ENCODE measurements at regions of chr18 and their contacts with region 1.

Region 1: GRCh38 chr18:11923450-11923849 is 15.3 kb upstream of the MPPE1 start:
- DNase-seq: no peak
- H3K4me3 ChIP-seq: no peak overlapping the region
- H3K27ac ChIP-seq: no peak overlapping the region
- H3K4me1 ChIP-seq: no peaks in the 10 kb centered on the region
- H3K27me3 ChIP-seq: no peaks in the 10 kb centered on the region
- CTCF ChIP-seq: no peak

Region 2: GRCh38 chr18:11733031-11733430 is 190.4 kb before region 1 on chr18:
- CTCF ChIA-PET with region 1: no interaction called
- dilution Hi-C with region 1: no loop called
- in situ Hi-C with region 1: no loop called
- intact Hi-C with region 1: no loop called
- DNase-seq: peak; percentile 63
- H3K4me3 ChIP-seq: peak overlapping the region in 1 of 3 experiments; percentile 16
- H3K27ac ChIP-seq: no peak overlapping the region
- H3K4me1 ChIP-seq: peaks cover 12% of the 10 kb centered on the region
- H3K27me3 ChIP-seq: no peaks in the 10 kb centered on the region
- CTCF ChIP-seq: peak; percentile 87 to 96

Region 3: DNA sequence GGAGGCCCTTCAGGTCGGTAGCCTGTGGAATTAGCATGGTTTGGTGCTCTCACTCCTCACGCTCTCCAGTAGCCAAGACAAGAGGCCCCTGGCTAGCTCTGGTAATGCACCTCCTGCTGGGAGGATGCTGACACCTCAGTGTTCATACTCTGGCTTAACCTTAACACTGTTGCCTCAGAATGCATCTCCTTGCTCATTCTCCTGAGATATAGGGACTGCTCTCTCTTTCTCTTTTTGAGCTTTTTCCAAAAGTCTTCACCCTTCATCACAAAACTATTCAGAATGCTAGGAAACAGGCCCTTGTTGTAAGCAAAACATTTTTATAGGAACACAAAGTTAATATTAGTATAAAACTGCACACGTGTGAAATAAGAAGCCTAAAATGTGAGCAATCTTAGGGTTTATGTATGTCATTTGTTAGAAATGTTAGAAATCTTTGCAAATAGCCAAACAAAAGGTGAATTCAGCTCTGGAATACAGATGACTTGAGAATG is 40.6 kb after region 1 on chr18:
- CTCF ChIA-PET with region 1: no interaction called
- dilution Hi-C with region 1: no loop called
- in situ Hi-C with region 1: no loop called
- intact Hi-C with region 1: no loop called
- DNase-seq: no peak
- H3K4me3 ChIP-seq: no peak overlapping the region
- H3K27ac ChIP-seq: no peak overlapping the region
- H3K4me1 ChIP-seq: peaks cover 6% of the 10 kb centered on the region
- H3K27me3 ChIP-seq: no peaks in the 10 kb centered on the region
- CTCF ChIP-seq: peak in 1 of 2 donors; percentile 29

Region 4: GRCh38 chr18:12031846-12032245 is 108.4 kb after region 1 on chr18:
- CTCF ChIA-PET with region 1: no interaction called
- dilution Hi-C with region 1: loop called (anchors 5 kb)
- in situ Hi-C with region 1: no loop called
- intact Hi-C with region 1: no loop called
- DNase-seq: no peak
- H3K4me3 ChIP-seq: no peak overlapping the region
- H3K27ac ChIP-seq: no peak overlapping the region
- H3K4me1 ChIP-seq: peaks cover 13% of the 10 kb centered on the region
- H3K27me3 ChIP-seq: no peaks in the 10 kb centered on the region
- CTCF ChIP-seq: no peak

Measured in mammary epithelial cell (primary cell).